Dorsolateral prefrontal cortex (tissue), 120 donors: ENCODE measurements at regions of chr18 and their contacts with region 1.

Region 1: GRCh38 chr18:23231340-23232021 is 96.2 kb downstream of the CABLES1 start:
- DNase-seq: peak in 3 of 10 donors; percentile 31 to 61 (median 58)
- H3K4me3 ChIP-seq: no peak overlapping the region
- H3K27ac ChIP-seq: peak overlapping the region in 56 of 59 donors; percentile 6 to 86 (median 61)
- H3K27me3 ChIP-seq: no peaks in the 10 kb centered on the region
- CTCF ChIP-seq: no peak

Region 2: DNA sequence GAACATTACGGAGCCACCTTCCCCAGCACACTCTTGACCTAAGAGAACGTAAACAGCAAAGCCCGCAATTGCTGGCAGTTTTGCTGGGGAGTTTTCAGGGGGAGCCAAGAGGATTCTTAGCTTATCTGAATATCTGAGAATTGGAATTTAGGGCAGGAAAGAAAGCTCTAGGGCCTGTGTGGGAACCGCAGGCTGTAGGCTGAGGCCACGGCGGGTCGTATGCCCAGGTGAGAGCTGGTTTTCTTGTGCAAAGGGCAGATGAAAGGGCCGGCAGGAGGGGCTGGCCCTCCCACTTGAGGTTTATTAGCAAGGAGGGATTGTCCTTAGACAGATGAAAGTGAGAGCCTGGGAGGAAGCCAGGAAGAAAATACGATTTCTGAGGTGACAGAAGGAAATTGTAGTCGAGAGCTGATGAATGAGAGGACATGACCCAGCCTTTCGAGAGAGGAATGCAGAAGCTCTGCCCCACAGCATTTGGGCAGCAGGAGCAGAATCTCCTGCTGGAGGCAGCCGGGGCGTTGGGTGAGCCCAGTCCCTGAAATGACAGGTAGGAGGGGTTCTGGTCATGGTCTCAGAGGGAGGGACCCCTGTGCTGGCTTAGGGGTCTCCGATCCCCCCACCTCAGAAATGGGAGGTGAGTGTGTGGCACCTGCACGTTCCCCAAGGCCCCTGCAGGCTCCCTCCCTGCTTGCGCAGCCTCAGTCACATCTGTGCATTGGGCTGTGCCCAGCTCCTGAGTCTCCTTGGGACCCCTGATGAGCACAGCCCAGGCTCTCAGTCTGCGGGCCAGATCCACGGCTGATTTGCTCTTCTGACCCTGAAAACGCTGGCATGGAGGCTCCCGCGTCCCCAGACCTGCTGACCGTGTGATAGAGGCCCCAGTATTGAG is 35.1 kb before region 1 on chr18:
- intact Hi-C with region 1: loop called in 1 of 2 experiments (anchors 5 kb)
- DNase-seq: no peak
- H3K4me3 ChIP-seq: no peak overlapping the region
- H3K27ac ChIP-seq: peak overlapping the region in 35 of 59 donors; percentile 3 to 76 (median 43)
- H3K27me3 ChIP-seq: no peaks in the 10 kb centered on the region
- CTCF ChIP-seq: no peak

Region 3: DNA sequence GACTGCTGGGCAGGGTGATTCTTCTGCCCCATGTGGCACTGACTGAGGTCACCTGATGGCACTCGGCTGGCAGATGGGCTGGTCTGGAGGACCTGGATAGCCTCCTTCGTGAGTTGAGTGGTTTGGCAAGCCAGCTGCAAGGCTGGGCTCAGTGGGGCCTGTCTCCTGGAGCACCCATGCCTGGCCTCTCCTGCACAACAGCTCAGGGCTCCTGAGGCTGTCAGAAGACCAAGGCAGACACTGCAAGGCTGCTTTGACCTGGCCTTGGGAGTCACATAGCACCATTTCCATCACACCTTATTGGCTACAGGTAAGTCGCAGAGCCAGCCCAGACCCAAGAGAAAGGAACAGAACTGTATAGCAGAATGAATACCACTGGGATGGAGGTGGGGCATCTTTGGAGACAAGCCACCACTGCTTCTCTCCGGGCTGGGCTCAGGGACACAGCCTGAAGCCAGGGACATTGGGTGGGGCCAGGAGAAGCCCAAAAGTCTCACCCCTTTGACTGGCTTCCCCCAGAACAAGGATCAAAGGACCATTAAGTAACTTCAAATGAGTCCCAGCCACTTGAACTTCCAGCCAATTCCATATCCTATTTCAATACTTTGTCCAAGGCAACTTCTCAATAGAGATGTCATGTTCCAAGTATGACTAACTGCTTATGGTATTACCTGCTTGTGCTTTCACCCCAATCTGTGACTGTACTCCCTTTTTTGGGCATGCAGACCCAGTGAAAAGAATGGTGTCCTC is 60.1 kb after region 1 on chr18:
- intact Hi-C with region 1: loop called in 1 of 2 experiments (anchors 10 kb)
- DNase-seq: no peak
- H3K4me3 ChIP-seq: no peak overlapping the region
- H3K27ac ChIP-seq: no peak overlapping the region
- H3K27me3 ChIP-seq: no peaks in the 10 kb centered on the region
- CTCF ChIP-seq: no peak

Region 4: DNA sequence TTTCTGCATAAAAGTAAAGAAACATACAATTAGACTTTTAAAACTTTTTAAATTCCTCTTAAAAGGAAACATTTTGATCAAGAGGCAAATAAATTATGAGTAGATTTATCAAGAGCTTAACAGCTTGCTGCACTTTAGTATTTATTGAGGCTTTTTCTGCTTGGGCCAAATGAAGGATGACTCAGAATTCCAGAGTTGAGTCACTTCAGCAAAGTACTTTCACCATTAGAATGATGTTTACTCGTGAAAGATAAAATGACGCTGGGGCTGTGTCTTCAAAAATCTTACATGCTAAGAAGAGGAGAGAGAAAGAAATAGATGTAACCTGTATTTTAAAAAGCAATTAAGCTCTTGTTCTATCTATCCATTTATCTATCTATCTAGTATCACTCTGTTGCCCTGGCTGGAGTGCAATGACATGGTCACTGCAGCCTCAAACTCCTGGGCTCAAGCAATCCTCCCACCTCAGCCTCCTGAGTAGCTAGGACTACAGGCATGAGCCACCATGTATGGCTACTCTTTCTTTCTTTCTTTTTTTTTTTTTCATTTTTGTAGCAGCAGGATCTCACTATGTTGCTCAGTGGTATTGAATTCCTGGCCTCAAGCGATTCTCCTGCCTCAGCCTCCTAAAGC is 146.3 kb after region 1 on chr18:
- intact Hi-C with region 1: loop called in 1 of 2 experiments (anchors 10 kb)
- DNase-seq: no peak
- H3K4me3 ChIP-seq: no peak overlapping the region
- H3K27ac ChIP-seq: peak overlapping the region in 1 of 59 donors; percentile 48
- H3K27me3 ChIP-seq: no peaks in the 10 kb centered on the region
- CTCF ChIP-seq: no peak